ENCODE measurements at regions of chr1 and their contacts with region 1.

Region 1: DNA sequence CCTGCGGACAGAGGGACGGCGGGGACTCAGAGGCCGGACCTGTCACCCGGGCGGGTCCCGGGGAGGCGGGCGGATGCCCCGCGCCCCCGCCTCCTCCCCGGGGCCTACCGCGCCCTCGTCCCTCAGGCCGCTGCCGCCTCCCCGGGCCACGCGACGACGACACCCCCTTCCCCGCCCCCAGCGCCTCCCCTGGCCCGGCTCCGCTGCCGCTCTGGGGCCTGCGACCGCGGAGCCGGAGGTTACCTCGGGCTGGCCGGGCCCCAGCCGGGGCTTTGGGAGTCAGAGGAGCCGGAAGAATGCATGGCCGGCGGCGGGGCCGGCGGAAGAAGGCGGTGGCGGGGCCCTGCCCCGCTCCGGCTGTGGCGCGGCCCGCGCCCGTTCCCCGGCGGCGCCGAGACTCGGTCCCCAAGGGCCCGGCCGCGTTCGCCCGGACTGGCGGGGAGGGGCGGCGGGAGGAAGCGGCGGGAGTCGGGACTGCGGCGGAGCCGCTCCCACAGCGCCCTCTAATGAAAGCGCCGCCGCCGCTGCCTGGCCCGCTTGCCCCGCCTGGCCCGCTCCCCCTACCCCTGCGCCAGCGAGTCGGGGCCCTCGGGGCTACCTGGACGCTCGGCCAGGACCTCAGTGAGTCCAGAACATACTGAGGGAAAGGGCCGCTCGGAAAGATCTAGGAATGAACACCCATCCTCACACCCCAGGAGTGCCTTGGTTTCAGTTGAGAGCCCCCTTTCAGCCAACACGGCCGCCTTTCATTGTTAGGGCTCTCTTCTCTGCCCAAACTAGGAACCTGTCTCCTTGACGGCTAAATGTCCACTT is at the start of gene LPGAT1:
- DNase-seq: peak; percentile 74
- ATAC-seq: peak; percentile 74
- H3K4me3 Mint-ChIP-seq: peak within 1 kb of the TSS; percentile 75
- H3K27ac Mint-ChIP-seq: peak within 1 kb of the TSS; percentile 86
- H3K4me1 Mint-ChIP-seq: peaks cover 61% of the 10 kb centered on the region
- H3K27me3 Mint-ChIP-seq: no peaks in the 10 kb centered on the region
- CTCF ChIP-seq: peak; percentile 66
- total RNA-seq, gene LPGAT1: 16.5 to 16.7 TPM

Region 2: DNA sequence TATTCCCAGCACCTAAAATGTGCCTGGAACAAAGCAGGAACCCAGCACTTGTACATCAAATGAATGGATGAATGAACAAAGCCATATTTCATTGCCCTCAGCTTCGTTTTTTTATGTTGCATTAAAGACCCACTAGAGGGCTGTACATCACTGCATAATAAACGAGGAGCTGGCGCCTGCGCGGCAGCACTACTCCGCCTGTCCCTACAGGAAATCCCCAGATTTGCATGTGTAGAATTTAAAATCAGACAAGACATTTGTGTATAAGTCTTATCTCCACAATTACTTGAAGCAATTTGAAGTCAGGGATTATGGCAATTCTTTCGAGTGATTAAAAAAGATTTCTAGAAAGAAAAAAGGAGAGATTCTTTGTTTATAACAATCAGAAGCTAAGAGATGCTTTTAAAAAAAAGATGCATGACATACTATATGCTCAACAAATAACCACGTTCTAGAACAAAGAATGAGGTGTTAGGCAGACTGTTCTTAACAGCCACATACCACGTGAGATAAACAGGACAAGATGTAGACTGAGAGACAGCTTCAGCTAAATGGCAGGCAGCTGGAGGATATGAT is 149.7 kb before region 1 on chr1:
- CTCF ChIA-PET with region 1: interaction called, 8 read pairs
- POLR2A ChIA-PET with region 1: interaction called, 3 read pairs
- intact Hi-C with region 1: loop called (anchors 5 kb)
- DNase-seq: peak; percentile 79
- ATAC-seq: peak; percentile 93
- H3K4me3 Mint-ChIP-seq: no peak overlapping the region
- H3K27ac Mint-ChIP-seq: peak overlapping the region; percentile 83
- H3K4me1 Mint-ChIP-seq: peaks cover 8% of the 10 kb centered on the region
- H3K27me3 Mint-ChIP-seq: no peaks in the 10 kb centered on the region
- CTCF ChIP-seq: peak; percentile 69

Region 3: GRCh38 chr1:211715971-211716370 is 114.6 kb before region 1 on chr1:
- CTCF ChIA-PET with region 1: no interaction called
- POLR2A ChIA-PET with region 1: no interaction called
- intact Hi-C with region 1: no loop called
- DNase-seq: no peak
- ATAC-seq: no peak
- H3K4me3 Mint-ChIP-seq: no peak overlapping the region
- H3K27ac Mint-ChIP-seq: no peak overlapping the region
- H3K4me1 Mint-ChIP-seq: no peaks in the 10 kb centered on the region
- H3K27me3 Mint-ChIP-seq: no peaks in the 10 kb centered on the region
- CTCF ChIP-seq: no peak

Region 4: DNA sequence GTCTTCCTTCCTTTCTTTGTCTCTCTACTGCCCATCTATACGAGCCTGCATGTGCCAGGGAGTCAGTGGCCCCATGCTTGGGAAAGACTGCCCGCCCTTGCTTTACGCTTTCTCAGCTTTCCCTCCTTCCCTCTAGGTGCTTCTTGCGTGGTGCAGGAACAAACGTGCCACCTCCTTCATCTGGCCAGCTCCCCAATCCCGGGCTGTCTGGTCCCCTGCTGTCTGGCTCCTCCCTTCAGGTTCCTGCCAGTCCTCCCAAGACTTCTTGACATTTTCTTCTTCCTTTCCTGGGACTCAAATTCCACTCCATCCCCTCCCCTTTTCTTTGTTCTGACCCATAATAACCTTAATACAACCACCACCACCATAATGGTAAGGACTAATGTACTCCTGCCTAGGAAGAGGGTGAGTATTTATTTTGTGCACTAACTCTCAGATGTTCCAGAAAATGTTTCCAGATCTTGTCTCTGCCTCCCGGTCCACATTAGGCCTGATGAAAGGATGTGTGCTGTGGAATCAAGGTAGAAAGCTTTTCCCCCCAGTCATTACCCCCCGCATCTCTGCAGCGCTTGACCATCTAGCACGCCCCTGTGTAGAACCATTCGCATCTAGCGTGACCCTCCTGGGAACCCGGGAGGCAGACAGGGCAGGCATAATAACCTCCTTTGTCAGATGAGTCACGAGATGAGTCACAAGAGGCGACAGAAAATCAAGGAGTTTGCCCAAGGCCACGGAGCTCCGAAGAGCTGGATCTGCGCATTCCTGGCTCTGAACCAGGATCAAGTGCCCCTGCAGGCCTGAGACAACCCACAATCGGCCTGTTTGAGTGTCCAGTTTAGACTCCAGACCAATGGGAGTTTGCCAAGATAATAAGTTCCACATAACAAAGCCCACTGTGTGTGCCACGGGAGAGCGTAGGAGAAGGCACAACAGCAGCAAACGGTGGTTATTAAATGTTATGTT is 95.0 kb before region 1 on chr1:
- CTCF ChIA-PET with region 1: no interaction called
- POLR2A ChIA-PET with region 1: no interaction called
- intact Hi-C with region 1: loop called (anchors 5 kb)
- DNase-seq: no peak
- ATAC-seq: no peak
- H3K4me3 Mint-ChIP-seq: no peak overlapping the region
- H3K27ac Mint-ChIP-seq: no peak overlapping the region
- H3K4me1 Mint-ChIP-seq: peaks cover 38% of the 10 kb centered on the region
- H3K27me3 Mint-ChIP-seq: no peaks in the 10 kb centered on the region
- CTCF ChIP-seq: no peak

Region 5: DNA sequence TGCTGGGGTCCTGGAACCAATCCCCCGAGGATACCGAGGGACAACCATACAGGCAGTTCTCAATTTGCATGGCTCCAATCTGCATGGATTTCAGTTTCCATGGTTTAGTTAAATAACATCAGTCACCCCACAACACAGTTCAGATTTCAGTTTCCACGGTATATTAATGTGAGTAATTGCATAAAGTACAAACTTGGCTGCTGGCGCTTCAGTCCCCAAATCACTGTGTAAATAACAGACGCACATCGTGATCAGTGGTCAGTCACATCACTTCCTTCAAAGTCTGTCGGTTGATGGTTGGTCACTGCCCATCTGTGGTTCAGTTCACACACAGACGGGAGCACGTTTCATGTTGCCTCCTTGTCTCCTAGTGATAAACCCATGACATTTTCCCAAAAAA is 66.4 kb after region 1 on chr1:
- CTCF ChIA-PET with region 1: no interaction called
- POLR2A ChIA-PET with region 1: no interaction called
- intact Hi-C with region 1: no loop called
- DNase-seq: no peak
- ATAC-seq: no peak
- H3K4me3 Mint-ChIP-seq: no peak overlapping the region
- H3K27ac Mint-ChIP-seq: no peak overlapping the region
- H3K4me1 Mint-ChIP-seq: no peaks in the 10 kb centered on the region
- H3K27me3 Mint-ChIP-seq: no peaks in the 10 kb centered on the region
- CTCF ChIP-seq: no peak

Region 6: DNA sequence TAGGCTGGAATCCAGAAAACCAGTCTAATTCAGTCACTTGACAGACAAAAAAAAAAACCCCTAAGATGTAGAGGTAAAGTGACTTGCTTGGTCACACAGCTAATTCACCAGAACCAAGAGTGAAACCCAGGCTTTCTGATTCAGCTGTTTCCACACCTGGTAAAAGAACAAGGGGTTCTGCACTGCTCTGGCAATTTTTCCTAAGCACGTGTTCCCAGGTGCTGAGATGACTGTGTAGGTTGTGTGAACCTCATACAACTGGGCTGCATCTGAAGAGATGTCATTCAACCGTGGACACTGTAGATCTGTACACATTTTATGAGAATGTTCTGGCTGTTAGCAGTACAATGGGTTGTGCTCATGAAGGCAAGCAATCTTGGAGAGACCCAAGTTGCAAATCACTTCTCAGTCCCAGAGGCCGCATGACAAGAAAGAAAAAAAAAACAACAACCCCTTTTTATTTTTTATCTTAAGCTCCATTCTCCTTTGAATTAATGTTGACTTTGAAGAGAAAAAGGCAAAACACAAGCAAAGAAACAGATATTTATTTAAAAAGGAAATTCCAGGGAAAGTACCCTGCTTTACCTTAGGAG is 109.4 kb after region 1 on chr1:
- CTCF ChIA-PET with region 1: no interaction called
- POLR2A ChIA-PET with region 1: interaction called, 7 read pairs
- intact Hi-C with region 1: loop called (anchors 2 kb)
- DNase-seq: peak; percentile 81
- ATAC-seq: peak; percentile 57
- H3K4me3 Mint-ChIP-seq: no peak overlapping the region
- H3K27ac Mint-ChIP-seq: no peak overlapping the region
- H3K4me1 Mint-ChIP-seq: peaks cover 48% of the 10 kb centered on the region
- H3K27me3 Mint-ChIP-seq: no peaks in the 10 kb centered on the region
- CTCF ChIP-seq: no peak

Region 7: GRCh38 chr1:212002536-212002935 is 172.0 kb after region 1 on chr1:
- CTCF ChIA-PET with region 1: no interaction called
- POLR2A ChIA-PET with region 1: no interaction called
- intact Hi-C with region 1: no loop called
- DNase-seq: no peak
- ATAC-seq: no peak
- H3K4me3 Mint-ChIP-seq: no peak overlapping the region
- H3K27ac Mint-ChIP-seq: no peak overlapping the region
- H3K4me1 Mint-ChIP-seq: no peaks in the 10 kb centered on the region
- H3K27me3 Mint-ChIP-seq: no peaks in the 10 kb centered on the region
- CTCF ChIP-seq: no peak

Measured in activated CD8-positive, alpha-beta T cell treated with anti-CD3 and anti-CD28 coated beads for 36 hours (primary cell).